RWPE1 (cell line): ENCODE measurements at regions of chr5 and their contacts with region 1.

Region 1: GRCh38 chr5:174045470-174046025 is at the start of gene NSG2:
- DNase-seq: peak; percentile 93
- H3K27ac ChIP-seq: no peak within 1 kb of the TSS
- CTCF ChIP-seq: peak; percentile 78

Region 2: DNA sequence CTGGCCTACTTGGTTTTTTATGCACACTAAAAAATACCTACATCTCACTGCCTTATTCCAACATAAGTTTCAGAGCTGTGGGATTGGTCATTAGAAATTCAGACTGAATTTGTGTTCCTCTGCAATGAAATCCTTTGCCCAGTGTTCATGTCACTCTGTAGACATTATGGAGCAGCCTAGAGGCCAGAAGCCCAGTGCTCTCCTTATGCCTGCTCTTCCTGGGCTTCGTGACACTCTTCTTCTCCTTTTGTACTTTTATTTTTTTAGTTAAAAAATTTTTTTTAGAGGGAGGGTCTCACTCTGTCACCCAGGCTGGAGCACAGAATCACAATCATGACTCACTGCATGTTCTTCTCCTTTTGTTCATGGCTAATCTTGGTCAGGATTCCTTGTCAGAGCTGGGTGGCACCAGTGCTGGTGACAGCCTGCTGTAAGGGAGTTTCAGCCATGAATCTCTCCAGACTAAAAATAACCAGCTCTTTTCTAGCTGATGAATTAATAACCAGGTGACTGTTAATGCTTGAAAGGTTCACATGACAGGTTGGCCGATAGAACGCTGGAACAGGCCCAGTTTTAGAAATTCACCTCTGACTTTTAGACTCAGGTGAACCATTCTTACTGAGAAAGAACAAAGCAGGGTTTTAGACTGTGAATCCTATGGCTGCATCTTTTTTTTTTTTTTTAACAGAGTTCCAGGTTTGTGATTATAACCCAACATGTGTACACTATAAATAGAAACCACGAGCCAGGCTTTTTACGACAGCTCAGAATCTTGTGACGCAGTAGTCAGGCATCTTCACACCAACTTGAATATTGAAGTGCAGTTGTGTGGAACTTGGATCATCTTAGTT is 90.7 kb before region 1 on chr5:
- CTCF ChIA-PET with region 1: no interaction called
- POLR2A ChIA-PET with region 1: no interaction called
- DNase-seq: no peak
- H3K27ac ChIP-seq: no peak overlapping the region
- CTCF ChIP-seq: no peak

Region 3: DNA sequence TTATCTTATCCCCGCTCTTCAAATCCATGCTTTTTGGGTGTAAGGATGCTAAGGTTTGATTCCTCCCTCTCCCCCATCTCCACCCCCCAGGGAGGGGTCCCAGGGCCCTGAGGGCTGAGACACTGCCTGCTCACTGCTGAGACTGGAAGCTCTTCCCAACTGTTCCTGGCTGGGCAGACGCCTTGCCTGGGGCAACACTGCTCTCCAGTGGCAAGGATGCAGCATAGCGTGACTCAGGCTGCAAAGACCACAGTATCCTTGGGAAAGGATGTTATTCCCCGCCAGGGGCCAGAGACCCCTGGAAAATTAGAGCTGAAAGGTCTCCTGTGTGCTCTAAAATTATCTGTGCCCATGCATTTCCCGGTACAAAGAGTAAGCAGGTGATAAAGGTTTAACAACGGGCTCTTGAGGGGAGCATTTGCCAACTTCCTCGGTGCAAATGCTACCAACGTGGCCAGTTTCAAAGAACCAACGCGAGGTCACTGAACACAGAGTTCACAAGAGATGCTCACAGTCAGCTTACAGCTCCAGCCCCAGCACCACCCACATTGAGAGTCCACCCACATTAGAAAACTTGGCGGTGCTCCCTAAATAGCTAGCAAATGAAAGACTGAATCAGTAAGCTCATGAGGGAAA is 271.8 kb after region 1 on chr5:
- CTCF ChIA-PET with region 1: interaction called, 54 read pairs
- POLR2A ChIA-PET with region 1: no interaction called
- DNase-seq: peak; percentile 77
- H3K27ac ChIP-seq: no peak overlapping the region
- CTCF ChIP-seq: peak; percentile 84